ENCODE measurements at regions of chr10 and their contacts with region 1.

Region 1: DNA sequence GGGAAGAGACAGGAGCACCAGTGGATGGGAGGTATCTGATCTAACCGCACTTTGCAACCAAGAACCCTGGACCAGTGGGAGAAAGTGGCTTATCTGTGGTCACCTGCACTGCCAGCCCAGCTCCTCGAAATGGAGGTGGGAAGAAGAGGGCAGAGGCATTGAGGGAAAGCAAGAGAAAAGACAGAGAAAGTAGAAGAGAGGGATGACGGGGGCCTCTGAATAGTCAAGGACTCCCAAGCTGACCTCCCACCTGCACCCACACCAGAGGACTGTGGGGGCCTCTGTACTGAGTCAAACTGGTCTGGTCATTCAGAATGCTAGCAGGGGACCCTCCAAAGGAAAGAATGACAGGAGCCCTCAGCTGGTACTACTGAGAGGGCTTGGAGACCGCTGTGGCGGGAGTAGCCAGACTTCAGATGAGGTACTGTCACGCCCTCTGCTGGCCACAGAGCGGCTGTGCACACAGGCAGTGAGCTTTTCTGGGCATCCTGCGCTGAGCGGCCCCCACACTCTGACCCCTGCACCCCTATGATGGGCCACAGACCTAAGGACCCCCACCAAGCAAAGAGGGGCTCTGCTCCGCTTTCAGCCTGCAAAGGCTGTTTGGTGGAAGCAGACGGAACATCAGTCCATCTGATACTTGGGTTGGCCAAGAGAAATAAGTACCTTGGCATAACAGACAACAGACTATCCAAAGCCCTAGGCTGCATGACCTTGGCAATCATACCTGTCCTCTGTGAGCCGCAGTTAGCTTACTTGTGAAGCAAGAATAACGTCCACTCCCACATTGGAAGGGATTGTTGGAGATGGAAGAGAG is 112.9 kb downstream of the COL13A1 start:
- DNase-seq: no peak
- H3K4me3 ChIP-seq: no peak overlapping the region
- CTCF ChIP-seq: peak; percentile 96

Region 2: DNA sequence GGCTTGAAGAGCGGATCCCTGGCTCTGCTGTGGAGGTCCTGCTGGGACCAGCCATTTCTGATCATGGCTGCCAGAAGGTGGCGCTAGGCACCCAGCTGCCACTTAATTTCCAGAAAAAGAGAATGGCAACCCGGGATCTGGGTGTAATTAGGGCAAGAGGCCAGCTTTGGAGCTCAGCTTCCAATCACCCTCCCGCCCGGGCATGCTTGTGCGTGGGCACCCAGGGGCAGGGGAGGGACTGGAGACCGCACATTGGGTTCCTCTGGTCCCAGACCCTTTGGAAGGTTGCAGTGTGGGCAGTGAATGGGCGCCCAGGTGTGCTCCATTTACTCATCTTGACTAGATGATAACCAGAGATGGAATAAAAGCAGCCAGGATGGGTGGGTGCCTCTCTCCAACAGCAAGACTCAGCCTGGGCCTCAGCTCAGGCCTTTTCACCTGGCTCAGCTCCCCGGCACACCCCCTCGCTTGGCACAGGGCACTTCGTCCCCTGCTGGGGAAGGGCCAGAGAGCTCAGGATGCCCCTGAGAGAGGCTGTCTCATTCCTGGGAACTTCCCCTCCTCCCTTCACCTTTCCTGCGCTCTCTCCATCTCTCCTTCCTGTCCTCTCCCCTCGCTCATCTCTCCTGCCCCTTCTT is 269.8 kb before region 1 on chr10:
- CTCF ChIA-PET with region 1: interaction called, 162 read pairs
- POLR2A ChIA-PET with region 1: no interaction called
- DNase-seq: no peak
- H3K4me3 ChIP-seq: no peak overlapping the region
- CTCF ChIP-seq: peak; percentile 80

Region 3: GRCh38 chr10:69742928-69743602 is 171.5 kb before region 1 on chr10:
- CTCF ChIA-PET with region 1: interaction called, 54 read pairs
- POLR2A ChIA-PET with region 1: no interaction called
- DNase-seq: no peak
- H3K4me3 ChIP-seq: no peak overlapping the region
- CTCF ChIP-seq: peak; percentile 78

Region 4: DNA sequence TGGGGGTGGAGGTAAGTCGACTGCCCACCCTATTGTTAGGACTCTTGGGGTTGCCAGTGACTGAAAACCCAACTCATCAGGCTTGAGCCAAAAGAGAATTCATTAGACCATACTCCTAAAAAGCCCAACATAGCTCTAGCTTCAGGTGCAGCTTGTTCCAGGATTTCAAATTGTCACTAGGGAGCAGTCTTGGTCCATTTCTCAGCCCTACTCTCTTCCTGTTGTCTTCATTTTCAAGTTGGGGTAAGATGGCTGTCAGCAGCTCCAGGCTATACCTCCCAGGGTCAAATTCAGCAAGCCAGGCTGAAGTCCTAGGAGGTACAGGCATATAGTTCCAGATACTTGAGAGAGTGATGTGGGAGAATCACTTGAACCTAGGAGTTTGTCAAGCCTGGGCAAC is 127.8 kb before region 1 on chr10:
- CTCF ChIA-PET with region 1: interaction called, 638 read pairs
- POLR2A ChIA-PET with region 1: no interaction called
- DNase-seq: no peak
- H3K4me3 ChIP-seq: no peak overlapping the region
- CTCF ChIP-seq: peak; percentile 48

Region 5: GRCh38 chr10:69866688-69867461 is 47.7 kb before region 1 on chr10:
- CTCF ChIA-PET with region 1: interaction called, 15 read pairs
- POLR2A ChIA-PET with region 1: no interaction called
- DNase-seq: no peak
- H3K4me3 ChIP-seq: peak overlapping the region; percentile 23
- CTCF ChIP-seq: no peak

Region 6: GRCh38 chr10:69901628-69902505 is 12.7 kb before region 1 on chr10:
- CTCF ChIA-PET with region 1: interaction called, 218 read pairs
- POLR2A ChIA-PET with region 1: no interaction called
- DNase-seq: no peak
- H3K4me3 ChIP-seq: no peak overlapping the region
- CTCF ChIP-seq: peak; percentile 84

Region 7: DNA sequence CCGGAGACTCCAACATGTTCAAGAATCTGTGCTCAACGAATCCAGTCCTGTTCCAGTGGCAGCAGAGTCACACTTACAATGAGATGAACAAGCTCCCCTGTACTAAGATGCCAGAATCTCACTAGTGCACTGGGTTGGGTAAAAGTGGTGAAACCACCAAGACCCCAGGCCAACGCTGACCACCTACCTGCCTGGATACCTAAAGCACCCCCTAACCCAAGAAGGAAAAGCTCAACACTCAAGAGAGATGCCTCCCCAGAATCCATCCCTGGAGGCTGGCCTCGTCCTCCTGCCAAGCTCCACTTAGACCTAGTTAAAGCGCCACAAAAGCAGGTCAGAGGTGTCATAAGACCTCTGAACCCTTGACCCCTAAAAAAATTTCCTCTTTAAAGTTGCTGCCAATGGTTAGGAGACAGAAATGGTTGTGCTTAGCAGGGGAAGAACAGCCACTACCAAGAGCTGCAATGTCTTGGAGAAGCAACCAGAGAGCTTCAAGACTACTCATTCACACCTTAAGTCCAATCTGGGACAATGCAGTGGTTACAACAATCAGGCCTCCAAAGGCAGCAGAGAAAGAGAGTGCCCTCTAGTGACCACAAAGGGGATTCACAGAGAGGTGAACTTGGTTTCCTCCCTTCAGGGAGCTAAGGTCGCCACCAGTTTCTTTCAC is 43.4 kb after region 1 on chr10:
- CTCF ChIA-PET with region 1: interaction called, 60 read pairs
- POLR2A ChIA-PET with region 1: no interaction called
- DNase-seq: no peak
- H3K4me3 ChIP-seq: no peak overlapping the region
- CTCF ChIP-seq: peak; percentile 77

Region 8: GRCh38 chr10:70320751-70321150 is 406.1 kb after region 1 on chr10:
- CTCF ChIA-PET with region 1: no interaction called
- POLR2A ChIA-PET with region 1: no interaction called
- DNase-seq: no peak
- H3K4me3 ChIP-seq: no peak overlapping the region
- CTCF ChIP-seq: no peak

Measured in AG04449 (cell line).